Activated naive CD4-positive, alpha-beta T cell treated with anti-CD3 and anti-CD28 coated beads for 36 hours (primary cell): ENCODE measurements at regions of chr9 and their contacts with region 1.

Region 1: GRCh38 chr9:33446946-33447798 is at the start of gene AQP3:
- DNase-seq: peak; percentile 85
- H3K4me3 Mint-ChIP-seq: peak within 1 kb of the TSS; percentile 86
- H3K27ac Mint-ChIP-seq: peak within 1 kb of the TSS; percentile 91
- H3K4me1 Mint-ChIP-seq: peaks cover 52% of the 10 kb centered on the region
- H3K27me3 Mint-ChIP-seq: no peaks in the 10 kb centered on the region
- total RNA-seq, gene AQP3: 7.2 to 8.1 TPM

Region 2: DNA sequence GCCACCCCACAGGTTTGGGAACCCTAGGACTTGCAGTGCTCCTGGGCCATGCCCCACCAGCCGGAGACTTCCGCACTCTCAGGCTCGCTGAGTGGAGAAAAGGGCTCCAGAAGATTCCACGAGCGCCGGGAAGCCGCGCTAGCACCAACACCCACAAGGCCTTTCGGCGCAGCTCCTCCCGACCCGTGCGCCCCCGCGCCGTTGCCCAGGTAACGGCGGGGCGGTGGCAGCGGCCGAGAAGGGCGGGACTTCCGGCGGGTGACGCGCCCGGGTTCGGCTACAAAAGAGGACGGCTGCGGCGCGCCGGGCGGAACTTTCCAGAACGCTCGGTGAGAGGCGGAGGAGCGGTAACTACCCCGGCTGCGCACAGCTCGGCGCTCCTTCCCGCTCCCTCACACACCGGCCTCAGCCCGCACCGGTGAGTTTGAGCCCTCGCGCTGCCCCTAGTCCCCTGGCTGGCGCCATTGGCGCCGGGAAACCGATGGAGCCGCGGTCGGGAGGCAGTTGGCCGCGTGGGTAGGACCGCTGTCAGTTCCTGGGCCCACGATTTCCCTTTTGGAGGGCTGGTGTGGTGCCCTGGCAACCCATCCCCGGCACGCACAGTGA is 422.1 kb before region 1 on chr9 and contains the start of gene DNAJA1:
- CTCF ChIA-PET with region 1: no interaction called
- intact Hi-C with region 1: loop called (anchors 2 kb)
- DNase-seq: peak; percentile 93
- H3K4me3 Mint-ChIP-seq: peak within 1 kb of the TSS; percentile 95
- H3K27ac Mint-ChIP-seq: peak within 1 kb of the TSS; percentile 94
- H3K4me1 Mint-ChIP-seq: peaks cover 75% of the 10 kb centered on the region
- H3K27me3 Mint-ChIP-seq: no peaks in the 10 kb centered on the region
- total RNA-seq, gene DNAJA1: 110 to 120 TPM

Region 3: DNA sequence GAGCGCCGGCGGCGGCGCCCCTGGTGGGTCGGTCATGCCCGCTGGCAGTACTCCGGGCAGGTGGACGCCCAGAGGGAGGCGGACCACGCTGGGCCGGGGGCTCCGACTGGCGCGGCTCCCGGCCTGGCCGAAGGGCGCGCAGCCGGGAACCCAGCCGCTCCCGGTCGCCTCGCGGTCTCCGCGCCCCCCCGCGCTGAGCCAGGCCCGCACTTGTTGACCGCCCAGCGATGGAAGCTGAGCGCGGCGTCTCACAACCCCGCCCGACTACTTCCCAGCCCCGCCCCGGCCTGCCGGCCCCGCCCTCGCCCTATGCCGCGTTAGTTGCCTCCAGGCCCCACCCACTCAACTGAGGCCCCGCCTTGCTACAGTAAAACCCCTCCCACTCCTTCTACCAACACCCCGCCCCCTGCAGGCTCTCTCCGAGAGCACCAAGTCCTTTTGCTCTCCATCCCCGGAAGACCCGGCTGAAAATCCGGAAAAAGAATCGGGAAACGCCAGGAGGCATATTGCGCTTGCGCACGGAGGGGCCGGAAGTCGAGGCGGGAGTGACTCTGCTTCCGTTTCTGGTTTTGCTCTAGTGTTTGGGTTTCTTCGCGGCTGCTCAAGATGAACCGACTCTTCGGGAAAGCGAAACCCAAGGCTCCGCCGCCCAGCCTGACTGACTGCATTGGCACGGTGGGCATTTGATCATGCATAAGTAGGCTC is 182.5 kb before region 1 on chr9 and contains the starts of genes BAG1 and CHMP5:
- CTCF ChIA-PET with region 1: no interaction called
- intact Hi-C with region 1: loop called (anchors 1 kb)
- DNase-seq: peak; percentile 100
- H3K4me3 Mint-ChIP-seq: peak within 1 kb of the TSS; percentile 94
- H3K27ac Mint-ChIP-seq: peak within 1 kb of the TSS; percentile 98
- H3K4me1 Mint-ChIP-seq: peaks cover 47% of the 10 kb centered on the region
- H3K27me3 Mint-ChIP-seq: no peaks in the 10 kb centered on the region
- total RNA-seq, gene BAG1: 38.1 to 40.5 TPM
- total RNA-seq, gene CHMP5: 151 to 162 TPM

Region 4: GRCh38 chr9:33366979-33367480 is 80.1 kb before region 1 on chr9:
- CTCF ChIA-PET with region 1: no interaction called
- intact Hi-C with region 1: no loop called
- DNase-seq: no peak
- H3K4me3 Mint-ChIP-seq: no peak overlapping the region
- H3K27ac Mint-ChIP-seq: no peak overlapping the region
- H3K4me1 Mint-ChIP-seq: no peaks in the 10 kb centered on the region
- H3K27me3 Mint-ChIP-seq: no peaks in the 10 kb centered on the region

Region 5: GRCh38 chr9:33404788-33405362 is 42.3 kb before region 1 on chr9:
- CTCF ChIA-PET with region 1: interaction called, 29 read pairs
- intact Hi-C with region 1: loop called (anchors 1 kb)
- DNase-seq: no peak
- H3K4me3 Mint-ChIP-seq: no peak overlapping the region
- H3K27ac Mint-ChIP-seq: no peak overlapping the region
- H3K4me1 Mint-ChIP-seq: no peaks in the 10 kb centered on the region
- H3K27me3 Mint-ChIP-seq: no peaks in the 10 kb centered on the region

Region 6: GRCh38 chr9:33425128-33425533 is 22.0 kb before region 1 on chr9:
- CTCF ChIA-PET with region 1: no interaction called
- intact Hi-C with region 1: no loop called
- DNase-seq: no peak
- H3K4me3 Mint-ChIP-seq: no peak overlapping the region
- H3K27ac Mint-ChIP-seq: no peak overlapping the region
- H3K4me1 Mint-ChIP-seq: no peaks in the 10 kb centered on the region
- H3K27me3 Mint-ChIP-seq: no peaks in the 10 kb centered on the region

Region 7: GRCh38 chr9:33436440-33436839 is 10.7 kb before region 1 on chr9:
- CTCF ChIA-PET with region 1: interaction called, 13 read pairs
- intact Hi-C with region 1: no loop called
- DNase-seq: no peak
- H3K4me3 Mint-ChIP-seq: no peak overlapping the region
- H3K27ac Mint-ChIP-seq: no peak overlapping the region
- H3K4me1 Mint-ChIP-seq: peaks cover 7% of the 10 kb centered on the region
- H3K27me3 Mint-ChIP-seq: no peaks in the 10 kb centered on the region

Region 8: DNA sequence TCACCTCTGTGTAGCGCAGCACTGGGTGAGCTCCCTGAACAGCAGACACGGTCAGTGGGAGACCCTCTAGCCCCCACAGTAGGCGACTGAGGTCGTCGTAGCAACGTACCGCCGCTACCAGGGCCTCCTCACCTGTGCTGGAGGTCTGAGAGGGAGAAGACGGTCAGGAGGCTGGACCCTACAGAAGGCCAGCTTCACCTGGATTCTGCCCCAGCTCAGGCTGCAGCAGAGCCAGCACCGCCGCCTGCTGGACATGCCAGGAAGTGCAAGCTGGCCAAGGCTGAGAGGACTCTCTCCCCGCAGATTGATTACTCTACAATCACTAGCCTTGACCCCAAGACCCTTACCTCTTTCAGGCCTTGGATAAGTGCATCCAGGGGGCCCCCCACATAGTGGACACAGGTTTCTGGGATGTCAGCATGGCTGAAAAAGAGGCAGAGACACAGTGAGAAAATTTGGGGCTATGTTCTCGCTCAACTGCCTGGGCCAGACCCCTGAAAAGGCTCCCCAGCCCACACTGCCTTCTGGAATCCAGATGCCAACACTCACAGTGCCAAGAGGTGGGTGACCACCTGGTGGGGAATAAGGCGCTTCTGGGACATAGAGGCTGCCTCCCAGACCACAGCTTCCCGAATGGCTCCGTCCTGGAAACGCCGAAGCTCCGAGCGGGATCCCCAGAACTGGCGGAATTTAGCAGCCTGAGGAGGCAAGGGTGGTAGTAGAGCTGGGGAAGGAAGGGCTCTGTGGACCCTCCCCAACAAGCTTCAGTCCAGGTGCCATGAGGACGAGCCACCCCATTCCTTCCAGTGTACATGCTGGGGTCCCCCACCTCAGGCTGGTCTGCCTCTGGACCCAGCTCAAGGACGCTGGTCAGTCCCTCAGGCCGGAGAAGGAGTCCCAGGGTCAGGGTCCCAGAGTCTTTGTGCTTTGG is 19.7 kb after region 1 on chr9:
- CTCF ChIA-PET with region 1: interaction called, 159 read pairs
- intact Hi-C with region 1: loop called (anchors 1 kb)
- DNase-seq: peak; percentile 81
- H3K4me3 Mint-ChIP-seq: no peak overlapping the region
- H3K27ac Mint-ChIP-seq: peak overlapping the region; percentile 24
- H3K4me1 Mint-ChIP-seq: peaks cover 16% of the 10 kb centered on the region
- H3K27me3 Mint-ChIP-seq: no peaks in the 10 kb centered on the region

Region 9: GRCh38 chr9:33510264-33511183 is 63.4 kb after region 1 on chr9:
- CTCF ChIA-PET with region 1: interaction called, 3 read pairs
- intact Hi-C with region 1: loop called (anchors 2 kb)
- DNase-seq: peak; percentile 50
- H3K4me3 Mint-ChIP-seq: peak overlapping the region; percentile 88
- H3K27ac Mint-ChIP-seq: peak overlapping the region; percentile 70
- H3K4me1 Mint-ChIP-seq: peaks cover 19% of the 10 kb centered on the region
- H3K27me3 Mint-ChIP-seq: peaks cover 2% of the 10 kb centered on the region

Region 10: GRCh38 chr9:34744295-34745221 is 1297.4 kb after region 1 on chr9:
- CTCF ChIA-PET with region 1: no interaction called
- intact Hi-C with region 1: no loop called
- DNase-seq: no peak
- H3K4me3 Mint-ChIP-seq: no peak overlapping the region
- H3K27ac Mint-ChIP-seq: no peak overlapping the region
- H3K4me1 Mint-ChIP-seq: peaks cover 3% of the 10 kb centered on the region
- H3K27me3 Mint-ChIP-seq: peaks cover 14% of the 10 kb centered on the region